Common myeloid progenitor, CD34-positive (primary cell): ENCODE measurements at regions of chr12 and their contacts with region 1.

Region 1: DNA sequence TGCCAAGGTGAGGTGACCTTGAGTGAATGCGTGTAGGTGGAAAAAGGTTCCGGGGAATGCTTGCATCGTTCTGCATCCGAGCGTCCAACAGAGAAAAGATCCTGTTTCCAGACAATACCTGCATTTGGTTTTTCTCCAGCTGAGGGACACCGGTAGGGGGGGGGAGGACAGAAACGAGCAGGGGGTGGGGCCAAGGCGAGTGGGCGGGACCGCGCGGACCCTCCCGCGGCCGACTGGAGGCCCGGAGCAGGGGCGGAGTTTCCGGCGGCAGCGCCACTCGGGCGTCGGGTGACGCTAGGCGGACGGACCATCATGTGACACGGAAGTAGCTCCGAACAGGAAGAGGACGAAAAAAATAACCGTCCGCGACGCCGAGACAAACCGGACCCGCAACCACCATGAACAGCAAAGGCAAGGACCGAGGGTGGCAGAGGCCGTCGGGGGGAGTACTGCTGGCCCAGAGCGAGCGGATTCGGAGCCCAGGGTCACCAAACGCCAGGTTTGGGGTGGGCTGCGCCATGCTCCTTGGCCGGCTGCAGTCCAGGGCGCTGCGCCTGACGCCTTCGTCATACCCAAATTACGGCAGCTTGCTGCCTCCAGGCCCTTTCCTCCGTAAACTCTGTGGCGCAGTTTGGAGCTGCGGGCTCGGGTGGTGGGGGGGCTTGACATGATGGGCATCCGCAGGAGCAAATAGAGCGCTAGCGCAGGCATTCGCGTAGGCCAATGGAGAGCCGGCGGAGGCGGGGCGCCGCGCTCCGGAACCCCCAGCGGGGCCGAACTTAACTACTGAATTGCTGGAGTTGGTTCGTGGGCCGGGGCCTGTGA is at the start of gene DAZAP2:
- DNase-seq: peak; percentile 96 to 97 (median 97)
- H3K4me3 ChIP-seq: peak within 1 kb of the TSS; percentile 87 to 99 (median 97)
- H3K27ac ChIP-seq: peak within 1 kb of the TSS; percentile 100
- H3K4me1 ChIP-seq: peaks cover 7 to 38% (median 16%) of the 10 kb centered on the region in 4 experiments
- H3K27me3 ChIP-seq: no peaks in the 10 kb centered on the region

Region 2: DNA sequence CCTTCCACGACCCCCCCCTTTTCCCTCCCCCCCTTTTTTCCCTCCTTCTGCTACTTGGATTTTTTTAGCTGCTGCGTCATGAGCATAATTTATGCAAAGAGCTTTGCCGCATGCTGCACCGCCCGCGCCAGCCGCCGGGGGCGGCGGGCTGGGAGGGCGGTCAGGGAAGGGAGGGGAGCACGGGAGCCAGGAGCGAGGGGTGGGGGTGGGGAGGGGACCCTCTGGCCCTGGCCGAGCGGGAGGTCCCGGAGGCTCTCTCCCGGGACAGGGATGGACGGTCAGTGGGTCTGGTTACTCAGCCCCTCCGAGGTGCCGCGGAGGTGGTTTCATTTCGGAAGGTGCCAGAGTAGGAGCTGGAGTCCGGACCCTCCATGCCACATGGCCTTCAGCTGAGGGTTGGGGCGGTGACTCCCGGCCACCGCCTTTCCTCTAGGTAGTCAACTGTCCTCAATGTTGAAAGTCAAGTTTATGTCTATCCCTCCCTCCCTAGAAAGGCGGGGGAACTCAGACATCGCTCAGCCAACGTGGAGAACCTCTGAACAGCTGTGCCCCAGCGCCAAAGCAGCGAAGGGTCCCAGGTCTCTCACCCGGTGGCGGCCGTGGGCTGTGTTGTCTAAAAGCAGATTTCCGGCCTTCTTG is 20.6 kb before region 1 on chr12 and contains the start of gene POU6F1:
- CTCF ChIA-PET with region 1: interaction called, 10 read pairs
- POLR2A ChIA-PET with region 1: interaction called, 24 read pairs
- DNase-seq: peak; percentile 80 to 89 (median 89)
- H3K4me3 ChIP-seq: peak within 1 kb of the TSS; percentile 39 to 90 (median 78)
- H3K27ac ChIP-seq: peak within 1 kb of the TSS; percentile 50 to 85
- H3K4me1 ChIP-seq: peaks cover 3 to 19% (median 16%) of the 10 kb centered on the region in 4 experiments
- H3K27me3 ChIP-seq: no peaks in the 10 kb centered on the region